Activated CD8-positive, alpha-beta T cell treated with anti-CD3 and anti-CD28 coated beads for 36 hours (primary cell): ENCODE measurements at regions of chr6 and their contacts with region 1.

Region 1: DNA sequence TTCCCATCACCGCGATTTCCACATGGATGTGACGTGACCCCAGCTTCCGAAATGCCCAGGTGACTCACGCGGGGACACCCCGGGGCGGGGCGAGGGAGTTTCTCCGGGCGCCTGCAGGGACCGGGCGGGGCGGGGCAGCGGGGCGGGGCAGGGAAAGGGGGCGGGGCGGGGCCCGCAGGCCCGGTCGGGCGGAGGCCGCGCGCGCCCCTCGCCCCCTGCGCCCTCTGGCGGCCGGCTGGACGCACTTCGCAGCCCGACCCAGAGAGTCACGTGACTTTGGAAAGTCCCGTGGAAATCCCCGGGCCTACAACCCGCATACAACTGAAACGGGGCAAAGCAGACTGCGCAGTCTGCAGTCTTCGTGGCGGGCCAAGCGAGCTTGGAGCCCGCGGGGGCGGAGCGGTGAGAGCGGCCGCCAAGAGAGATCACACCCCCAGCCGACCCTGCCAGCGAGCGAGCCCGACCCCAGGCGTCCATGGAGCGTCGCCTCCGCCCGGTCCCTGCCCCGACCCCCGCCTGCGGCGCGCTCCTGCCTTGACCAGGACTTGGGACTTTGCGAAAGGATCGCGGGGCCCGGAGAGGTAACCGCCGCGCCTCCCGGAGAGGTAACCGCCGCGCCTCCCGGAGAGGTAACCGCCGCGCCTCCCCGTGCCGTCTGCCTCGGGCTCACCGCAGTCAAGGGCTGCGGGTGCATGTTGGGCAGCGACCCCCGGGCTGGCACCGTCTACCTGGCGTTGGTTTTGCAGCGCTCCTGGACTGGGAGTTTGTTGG is at the start of gene TNFAIP3:
- DNase-seq: peak; percentile 97
- ATAC-seq: peak; percentile 70
- H3K4me3 Mint-ChIP-seq: peak within 1 kb of the TSS; percentile 98
- H3K27ac Mint-ChIP-seq: peak within 1 kb of the TSS; percentile 99
- H3K4me1 Mint-ChIP-seq: peaks cover 39% of the 10 kb centered on the region
- H3K27me3 Mint-ChIP-seq: no peaks in the 10 kb centered on the region
- CTCF ChIP-seq: peak; percentile 60
- total RNA-seq, gene TNFAIP3: 399 to 402 TPM

Region 2: DNA sequence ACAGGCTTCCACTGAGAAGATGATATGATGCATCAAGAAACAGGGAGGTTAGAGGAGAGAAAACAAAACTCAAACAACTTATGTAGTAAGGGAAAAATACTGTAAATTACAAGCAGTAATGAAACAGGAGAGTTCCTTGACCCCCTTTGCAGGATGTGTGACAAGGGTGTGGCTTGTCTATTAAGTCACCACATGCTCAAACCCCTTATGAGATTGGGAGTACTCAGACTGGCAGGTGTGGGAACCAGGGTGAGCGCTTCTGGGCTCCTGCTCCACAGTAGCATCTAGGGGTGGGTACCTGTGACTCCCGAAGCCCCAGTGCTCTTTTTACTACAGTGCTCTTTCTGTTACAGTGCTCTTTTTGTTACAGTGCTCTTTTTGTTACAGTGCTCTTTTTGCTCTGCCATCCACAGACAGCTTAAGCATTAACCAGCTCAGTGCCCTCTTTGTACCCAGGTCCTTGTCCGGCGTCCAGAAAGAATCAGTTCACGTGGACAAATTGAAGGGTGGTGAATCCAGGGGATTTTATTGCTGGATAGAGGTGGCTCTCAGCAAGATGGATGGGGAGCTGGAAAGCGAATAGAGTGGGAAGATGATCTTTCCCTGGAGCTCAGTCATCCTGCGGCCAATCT is 401.6 kb before region 1 on chr6:
- CTCF ChIA-PET with region 1: no interaction called
- POLR2A ChIA-PET with region 1: no interaction called
- intact Hi-C with region 1: no loop called
- DNase-seq: no peak
- ATAC-seq: no peak
- H3K4me3 Mint-ChIP-seq: no peak overlapping the region
- H3K27ac Mint-ChIP-seq: no peak overlapping the region
- H3K4me1 Mint-ChIP-seq: no peaks in the 10 kb centered on the region
- H3K27me3 Mint-ChIP-seq: peaks cover 1% of the 10 kb centered on the region
- CTCF ChIP-seq: no peak

Region 3: GRCh38 chr6:137717074-137718073 is 149.7 kb before region 1 on chr6:
- CTCF ChIA-PET with region 1: interaction called, 37 read pairs
- POLR2A ChIA-PET with region 1: interaction called, 15 read pairs
- intact Hi-C with region 1: no loop called
- DNase-seq: peak; percentile 94
- ATAC-seq: peak; percentile 85
- H3K4me3 Mint-ChIP-seq: peak overlapping the region; percentile 13
- H3K27ac Mint-ChIP-seq: peak overlapping the region; percentile 92
- H3K4me1 Mint-ChIP-seq: peaks cover 45% of the 10 kb centered on the region
- H3K27me3 Mint-ChIP-seq: no peaks in the 10 kb centered on the region
- CTCF ChIP-seq: no peak

Region 4: DNA sequence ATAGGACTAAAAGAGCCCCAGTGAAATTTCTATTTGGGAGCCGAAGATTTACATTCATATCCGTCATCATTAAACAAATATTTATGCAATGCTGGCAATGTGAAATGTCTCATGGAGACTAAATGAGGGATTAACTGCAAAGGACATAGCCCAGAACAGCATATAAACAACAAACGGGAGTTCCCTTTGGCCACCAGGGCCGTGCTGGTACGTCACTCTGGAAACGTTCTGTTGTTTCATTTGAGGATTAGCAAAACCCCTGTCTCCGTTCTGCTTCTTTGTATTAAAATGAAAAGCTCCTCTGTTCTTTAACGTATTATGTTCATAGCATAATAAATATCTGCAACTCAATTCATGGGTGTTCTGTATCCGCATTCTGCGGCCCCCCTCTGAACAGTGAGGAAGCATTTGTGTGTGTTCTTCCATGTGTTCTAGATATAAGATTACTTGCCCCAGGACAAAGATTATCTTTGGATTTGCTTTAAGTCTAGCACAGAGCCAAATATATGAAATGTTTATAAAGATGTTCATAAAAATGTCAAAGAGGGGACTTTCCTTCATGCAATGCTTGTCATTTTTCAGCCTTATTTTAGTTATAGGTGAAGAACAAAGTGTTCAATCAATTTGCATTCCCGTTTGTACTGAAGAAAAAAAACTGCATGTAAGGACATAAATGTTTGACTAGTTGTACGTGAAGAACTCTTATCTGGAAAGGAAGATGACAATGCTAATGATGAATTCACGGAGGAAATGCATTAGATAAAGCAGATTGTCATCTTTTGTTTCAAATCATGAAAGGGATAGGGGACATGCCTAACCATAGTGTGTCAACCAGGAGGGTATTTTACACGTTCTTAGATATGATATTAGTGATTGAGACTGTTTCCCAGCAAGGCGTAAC is 90.1 kb before region 1 on chr6:
- CTCF ChIA-PET with region 1: no interaction called
- POLR2A ChIA-PET with region 1: no interaction called
- intact Hi-C with region 1: no loop called
- DNase-seq: no peak
- ATAC-seq: no peak
- H3K4me3 Mint-ChIP-seq: no peak overlapping the region
- H3K27ac Mint-ChIP-seq: no peak overlapping the region
- H3K4me1 Mint-ChIP-seq: no peaks in the 10 kb centered on the region
- H3K27me3 Mint-ChIP-seq: no peaks in the 10 kb centered on the region
- CTCF ChIP-seq: no peak

Region 5: GRCh38 chr6:137799950-137800568 is 67.0 kb before region 1 on chr6:
- CTCF ChIA-PET with region 1: interaction called, 221 read pairs
- POLR2A ChIA-PET with region 1: interaction called, 10 read pairs
- intact Hi-C with region 1: loop called (anchors 1 kb)
- DNase-seq: peak; percentile 85
- ATAC-seq: peak; percentile 77
- H3K4me3 Mint-ChIP-seq: no peak overlapping the region
- H3K27ac Mint-ChIP-seq: peak overlapping the region; percentile 88
- H3K4me1 Mint-ChIP-seq: peaks cover 72% of the 10 kb centered on the region
- H3K27me3 Mint-ChIP-seq: no peaks in the 10 kb centered on the region
- CTCF ChIP-seq: peak; percentile 74

Region 6: DNA sequence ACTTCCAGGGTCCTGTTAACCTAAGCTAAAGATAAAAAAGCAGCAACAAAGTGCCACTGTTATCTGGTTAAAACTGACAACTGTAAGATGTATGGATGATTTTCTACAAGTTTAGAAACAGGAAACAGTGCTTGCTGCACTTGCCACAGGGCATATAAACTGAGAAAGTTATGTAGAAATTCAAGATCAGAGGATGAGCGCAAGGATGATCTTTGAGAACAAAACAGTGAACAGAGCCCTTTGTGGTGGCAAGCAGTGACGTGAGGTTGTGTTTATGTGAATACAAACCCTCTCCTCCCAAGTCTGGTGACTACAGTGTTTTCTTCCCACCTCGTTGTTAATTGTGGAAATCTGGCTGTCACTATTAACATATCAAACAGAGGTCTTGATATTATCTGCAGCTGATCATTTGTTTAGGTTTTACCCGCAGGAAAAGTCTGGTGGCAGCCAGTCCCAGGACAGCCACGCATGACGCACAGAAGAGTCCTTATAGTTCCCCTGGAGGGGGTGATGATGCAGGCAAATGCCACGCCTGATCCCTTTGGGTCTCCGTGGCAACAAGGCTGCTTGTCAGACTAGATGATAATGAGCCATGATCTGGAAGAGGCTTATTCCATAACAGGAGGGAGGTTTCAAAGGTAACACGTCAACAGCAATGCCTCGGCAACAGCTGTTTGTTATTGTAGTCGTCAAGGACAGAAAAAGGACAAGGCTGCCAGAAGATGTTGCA is 43.1 kb before region 1 on chr6:
- CTCF ChIA-PET with region 1: interaction called, 16 read pairs
- POLR2A ChIA-PET with region 1: interaction called, 17 read pairs
- intact Hi-C with region 1: loop called (anchors 1 kb)
- DNase-seq: peak; percentile 85
- ATAC-seq: peak; percentile 44
- H3K4me3 Mint-ChIP-seq: peak overlapping the region; percentile 60
- H3K27ac Mint-ChIP-seq: peak overlapping the region; percentile 93
- H3K4me1 Mint-ChIP-seq: peaks cover 86% of the 10 kb centered on the region
- H3K27me3 Mint-ChIP-seq: no peaks in the 10 kb centered on the region
- CTCF ChIP-seq: no peak

Region 7: DNA sequence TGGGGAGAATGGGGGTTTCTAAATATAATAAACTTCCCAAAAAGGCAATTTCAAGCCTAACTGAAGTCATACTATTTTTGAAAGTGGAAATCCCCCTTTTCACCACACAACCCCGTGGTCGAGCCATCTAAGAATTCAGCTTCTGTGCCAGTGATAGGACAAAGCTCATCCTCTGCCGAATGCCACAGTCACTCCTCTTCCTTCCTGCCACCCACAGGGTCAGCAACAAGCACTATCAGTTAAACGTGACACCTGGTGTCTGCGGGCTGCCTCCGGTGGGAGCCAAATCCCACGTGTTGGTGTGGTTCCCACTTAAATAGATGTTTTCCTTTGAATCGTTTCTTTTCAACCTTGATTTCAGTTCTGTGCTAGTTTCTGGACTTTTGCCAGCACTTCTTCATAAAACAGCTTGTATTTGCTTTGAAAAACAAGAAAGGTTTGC is 60.7 kb after region 1 on chr6:
- CTCF ChIA-PET with region 1: interaction called, 30 read pairs
- POLR2A ChIA-PET with region 1: interaction called, 11 read pairs
- intact Hi-C with region 1: no loop called
- DNase-seq: peak; percentile 93
- ATAC-seq: peak; percentile 94
- H3K4me3 Mint-ChIP-seq: peak overlapping the region; percentile 65
- H3K27ac Mint-ChIP-seq: peak overlapping the region; percentile 97
- H3K4me1 Mint-ChIP-seq: peaks cover 78% of the 10 kb centered on the region
- H3K27me3 Mint-ChIP-seq: no peaks in the 10 kb centered on the region
- CTCF ChIP-seq: no peak

Region 8: GRCh38 chr6:137944793-137945498 is 77.8 kb after region 1 on chr6:
- CTCF ChIA-PET with region 1: interaction called, 360 read pairs
- POLR2A ChIA-PET with region 1: interaction called, 17 read pairs
- intact Hi-C with region 1: loop called (anchors 2 kb)
- DNase-seq: no peak
- ATAC-seq: peak; percentile 31
- H3K4me3 Mint-ChIP-seq: no peak overlapping the region
- H3K27ac Mint-ChIP-seq: peak overlapping the region; percentile 4
- H3K4me1 Mint-ChIP-seq: peaks cover 53% of the 10 kb centered on the region
- H3K27me3 Mint-ChIP-seq: no peaks in the 10 kb centered on the region
- CTCF ChIP-seq: peak; percentile 79

Region 9: GRCh38 chr6:138161338-138162110 is 294.4 kb after region 1 on chr6 and contains the start of gene ARFGEF3:
- CTCF ChIA-PET with region 1: no interaction called
- POLR2A ChIA-PET with region 1: no interaction called
- intact Hi-C with region 1: no loop called
- DNase-seq: peak; percentile 70
- ATAC-seq: peak; percentile 97
- H3K4me3 Mint-ChIP-seq: peak within 1 kb of the TSS; percentile 73
- H3K27ac Mint-ChIP-seq: peak within 1 kb of the TSS; percentile 8
- H3K4me1 Mint-ChIP-seq: peaks cover 12% of the 10 kb centered on the region
- H3K27me3 Mint-ChIP-seq: peaks cover 50% of the 10 kb centered on the region
- CTCF ChIP-seq: no peak
- total RNA-seq, gene ARFGEF3: 1.7 to 1.8 TPM

Region 10: GRCh38 chr6:138188278-138188941 is 321.3 kb after region 1 on chr6:
- CTCF ChIA-PET with region 1: no interaction called
- POLR2A ChIA-PET with region 1: no interaction called
- intact Hi-C with region 1: no loop called
- DNase-seq: no peak
- ATAC-seq: no peak
- H3K4me3 Mint-ChIP-seq: no peak overlapping the region
- H3K27ac Mint-ChIP-seq: no peak overlapping the region
- H3K4me1 Mint-ChIP-seq: no peaks in the 10 kb centered on the region
- H3K27me3 Mint-ChIP-seq: peaks cover 16% of the 10 kb centered on the region
- CTCF ChIP-seq: no peak